ENCODE measurements at regions of chr2 and their contacts with region 1.

Region 1: GRCh38 chr2:231104115-231104713 is 20.6 kb downstream of the HTR2B start:
- DNase-seq: peak; percentile 75
- H3K4me3 ChIP-seq: no peak overlapping the region
- H3K27ac ChIP-seq: peak overlapping the region; percentile 55 to 76 (median 65)
- H3K4me1 ChIP-seq: peaks cover 0 to 48% (median 38%) of the 10 kb centered on the region in 4 donors
- H3K27me3 ChIP-seq: no peaks in the 10 kb centered on the region
- CTCF ChIP-seq: peak; percentile 84 to 91 (median 87)
- EP300 ChIP-seq: no peak
- POLR2A ChIP-seq: no peak

Region 2: DNA sequence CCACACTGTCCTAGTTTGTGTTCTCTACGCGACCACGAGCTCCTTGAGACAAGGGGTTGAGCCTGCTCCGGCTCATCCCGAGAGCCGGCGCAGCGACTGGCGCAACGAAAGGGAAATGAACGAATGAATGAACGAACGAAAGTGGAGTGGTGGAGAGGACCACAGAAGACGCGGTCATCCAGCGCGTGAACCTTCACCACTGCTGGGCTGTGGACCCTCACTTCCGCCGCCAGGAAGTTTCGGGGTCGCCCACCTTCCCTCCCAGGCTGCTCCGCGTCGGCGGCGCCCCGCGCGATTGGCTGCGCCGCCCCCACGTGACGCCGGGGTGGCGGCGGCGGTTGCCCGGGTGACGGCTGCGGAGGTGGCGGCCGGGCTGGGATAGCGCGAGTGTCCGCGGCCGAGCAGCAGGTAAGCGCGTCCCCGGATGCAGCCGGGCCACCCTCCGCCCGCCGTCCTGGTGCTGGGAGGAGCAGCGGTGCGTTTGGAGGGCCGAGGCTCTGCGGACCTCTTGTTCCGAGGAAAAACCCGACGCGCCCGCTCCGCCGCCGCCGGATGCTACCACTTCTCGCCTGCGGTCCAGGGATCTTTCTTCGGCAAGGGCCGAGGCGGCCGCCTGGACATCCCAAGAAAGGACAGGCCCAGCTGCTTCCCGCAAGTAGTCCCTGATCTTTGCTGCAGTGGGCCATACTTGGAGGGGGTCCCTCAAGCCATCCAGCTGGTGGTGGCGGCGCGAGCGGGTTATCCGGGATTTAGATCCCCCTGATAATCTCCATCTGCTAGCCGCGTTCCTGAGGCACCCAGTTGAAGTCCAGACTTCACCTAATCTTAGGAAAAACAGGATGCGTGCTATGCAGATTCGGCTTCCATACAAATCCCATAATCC is 94.3 kb after region 1 on chr2 and contains the start of gene ARMC9:
- intact Hi-C with region 1: loop called (anchors 2 kb)
- DNase-seq: peak; percentile 82
- H3K4me3 ChIP-seq: peak within 1 kb of the TSS; percentile 57 to 81 (median 77)
- H3K27ac ChIP-seq: peak within 1 kb of the TSS; percentile 77 to 91 (median 84)
- H3K4me1 ChIP-seq: peaks cover 0 to 48% (median 36%) of the 10 kb centered on the region in 4 donors
- H3K27me3 ChIP-seq: no peaks in the 10 kb centered on the region
- CTCF ChIP-seq: no peak
- EP300 ChIP-seq: no peak
- POLR2A ChIP-seq: peak in 1 of 2 donors; percentile 35
- total RNA-seq, gene ARMC9: 24.3 to 95.3 (median 52.7) TPM

Region 3: DNA sequence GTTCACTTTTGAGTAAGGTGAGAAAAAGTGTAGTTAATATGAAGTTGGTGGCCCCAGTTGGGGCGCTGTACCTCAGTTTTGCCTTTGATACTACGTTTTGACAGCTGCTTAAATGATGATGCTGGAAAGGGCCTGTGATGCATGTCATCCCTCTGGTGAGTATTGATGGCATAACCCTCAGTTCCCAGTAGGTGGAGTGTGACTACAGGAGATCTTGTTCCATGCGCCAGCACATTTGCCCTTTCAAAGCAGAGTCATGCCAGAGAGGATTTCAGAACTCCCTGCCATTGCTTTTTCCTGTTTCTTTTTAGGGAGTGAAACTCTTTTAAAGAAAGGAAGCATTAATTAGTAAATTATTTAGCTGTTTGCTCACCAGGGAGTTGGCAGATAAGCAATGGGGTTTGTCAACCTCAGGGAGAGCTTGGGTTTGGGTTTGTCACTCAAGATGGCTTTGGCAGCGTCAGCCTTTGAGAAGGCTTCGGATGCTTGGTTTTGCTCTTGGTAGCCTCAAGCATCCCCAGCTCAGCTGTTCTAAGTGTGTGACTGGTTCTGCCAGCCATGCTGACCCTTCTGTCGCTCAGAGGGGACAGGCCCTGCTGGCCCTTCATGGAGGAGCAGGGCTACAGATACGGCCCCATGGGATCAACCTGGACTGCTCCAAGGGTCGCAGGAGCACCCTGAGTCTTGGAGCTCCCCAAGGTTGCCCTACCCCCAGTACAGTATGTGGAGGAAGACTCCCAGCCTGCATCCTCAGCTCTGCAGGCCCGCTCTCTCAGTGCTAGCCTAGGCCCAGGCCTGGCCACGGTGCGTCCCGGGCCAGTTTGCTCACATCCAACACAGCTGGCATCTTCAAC is 123.3 kb after region 1 on chr2:
- intact Hi-C with region 1: loop called (anchors 1 kb)
- DNase-seq: peak; percentile 88
- H3K4me3 ChIP-seq: no peak overlapping the region
- H3K27ac ChIP-seq: peak overlapping the region; percentile 69 to 89 (median 82)
- H3K4me1 ChIP-seq: peaks cover 0 to 64% (median 49%) of the 10 kb centered on the region in 4 donors
- H3K27me3 ChIP-seq: no peaks in the 10 kb centered on the region
- CTCF ChIP-seq: peak; percentile 75 to 93 (median 84)
- EP300 ChIP-seq: no peak
- POLR2A ChIP-seq: no peak

Region 4: DNA sequence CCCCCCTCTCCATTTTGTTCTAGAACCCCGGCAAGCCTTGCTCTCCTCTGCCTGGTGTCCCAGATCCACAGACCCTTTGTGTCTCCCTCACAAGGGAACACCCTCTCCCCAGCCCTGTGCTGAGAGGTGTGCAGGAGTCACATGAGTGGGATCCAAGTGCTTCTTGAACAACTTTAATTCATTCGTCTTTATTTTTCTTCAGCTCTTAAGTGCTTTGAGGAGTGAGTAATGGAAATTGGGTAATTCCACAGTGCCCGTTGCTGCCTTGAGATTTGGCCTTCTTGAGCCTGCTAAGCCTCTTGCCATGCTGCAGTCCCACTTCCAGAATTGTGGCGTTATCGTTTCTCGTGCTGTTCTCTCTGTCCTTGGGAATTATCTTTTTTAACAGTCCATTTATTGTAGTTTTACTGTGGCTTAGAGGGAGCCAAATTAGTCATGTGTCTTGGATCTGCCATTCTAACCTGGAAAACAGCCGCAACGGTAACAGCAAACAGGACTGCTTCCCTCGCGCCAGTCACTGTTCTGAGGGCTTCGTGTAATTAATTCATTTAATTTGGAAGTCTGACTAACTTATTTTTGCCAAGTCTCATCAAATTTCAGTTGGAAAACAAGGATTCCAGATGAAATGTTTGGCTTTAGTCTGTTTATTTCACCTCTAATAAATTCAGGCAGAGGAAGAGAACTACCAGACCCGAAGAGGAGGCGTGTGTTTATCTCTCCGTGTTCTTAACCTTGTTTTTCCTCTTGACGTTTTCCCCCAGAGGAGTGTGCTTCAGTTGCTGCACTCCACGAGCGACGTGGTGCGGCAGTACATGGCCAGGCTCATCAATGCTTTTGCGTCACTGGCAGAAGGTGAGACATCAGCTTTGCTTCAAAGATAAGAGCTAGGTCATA is 166.3 kb after region 1 on chr2:
- intact Hi-C with region 1: loop called (anchors 5 kb)
- DNase-seq: peak; percentile 94
- H3K4me3 ChIP-seq: peak overlapping the region in 3 of 4 donors; percentile 1 to 34 (median 6)
- H3K27ac ChIP-seq: peak overlapping the region in 3 of 4 donors; percentile 85 to 91 (median 85)
- H3K4me1 ChIP-seq: peaks cover 0 to 39% (median 23%) of the 10 kb centered on the region in 4 donors
- H3K27me3 ChIP-seq: no peaks in the 10 kb centered on the region
- CTCF ChIP-seq: no peak
- EP300 ChIP-seq: peak; percentile 73 to 88 (median 82)
- POLR2A ChIP-seq: no peak

Region 5: DNA sequence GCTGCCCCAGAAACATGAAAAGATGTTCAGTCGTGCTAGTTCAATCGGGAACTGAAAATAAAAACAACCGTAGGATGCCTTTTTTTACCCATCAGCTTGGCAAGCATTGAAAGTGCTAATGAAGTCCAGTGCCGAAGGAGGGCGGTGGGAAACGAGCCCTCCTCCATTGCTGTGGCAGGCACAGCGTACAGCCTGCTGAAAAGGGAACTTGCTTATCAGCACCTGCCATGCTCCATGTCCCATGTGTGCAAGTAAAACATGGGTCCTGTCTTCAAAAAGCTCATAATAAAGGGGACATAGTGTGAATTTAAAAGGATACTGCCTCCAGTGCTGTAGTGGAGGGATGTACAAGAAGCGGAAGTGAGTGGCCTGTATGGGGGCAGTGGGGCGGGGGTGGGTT is 176.6 kb after region 1 on chr2:
- intact Hi-C with region 1: loop called (anchors 5 kb)
- DNase-seq: no peak
- H3K4me3 ChIP-seq: no peak overlapping the region
- H3K27ac ChIP-seq: no peak overlapping the region
- H3K4me1 ChIP-seq: no peaks in the 10 kb centered on the region
- H3K27me3 ChIP-seq: no peaks in the 10 kb centered on the region
- CTCF ChIP-seq: no peak
- EP300 ChIP-seq: no peak
- POLR2A ChIP-seq: no peak

Region 6: DNA sequence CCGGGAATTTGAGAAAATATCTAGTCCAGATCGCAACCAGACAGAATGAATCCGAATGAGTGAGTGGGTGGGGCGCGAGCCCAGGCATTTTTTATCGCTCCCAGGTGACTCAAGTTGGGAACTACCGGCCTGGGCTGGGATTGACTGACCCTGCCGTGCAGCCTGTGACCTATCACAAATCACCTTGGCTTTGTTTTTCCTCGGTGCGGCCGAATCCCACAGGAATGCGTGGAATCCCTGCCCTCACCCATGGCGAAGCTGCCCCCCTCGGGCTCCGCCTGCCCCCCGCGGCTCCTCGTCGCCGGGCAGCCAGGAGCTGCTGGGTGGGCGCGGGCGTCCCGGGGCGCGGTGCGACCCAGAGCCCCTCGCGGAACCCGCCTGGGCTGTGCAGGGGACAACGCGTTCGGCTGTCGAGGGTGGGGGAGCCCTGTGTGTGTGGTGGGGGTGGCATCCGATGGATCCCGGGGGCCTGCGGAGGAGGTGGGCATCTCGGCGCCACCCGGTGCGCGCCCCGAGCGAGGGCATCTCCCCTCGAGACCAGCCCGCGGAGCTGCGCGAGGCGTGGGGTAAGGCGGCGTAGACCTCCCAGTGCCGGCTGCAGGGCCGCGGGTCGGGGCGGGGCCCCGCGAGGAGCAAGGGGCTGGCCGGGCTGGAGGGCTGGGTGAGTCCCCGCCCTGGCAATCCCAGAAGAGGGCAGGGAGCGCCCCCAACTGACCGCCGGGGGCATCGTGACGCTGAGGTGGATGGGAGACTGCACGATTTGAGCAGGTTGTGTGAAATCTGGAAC is 307.8 kb after region 1 on chr2:
- intact Hi-C with region 1: loop called (anchors 2 kb)
- DNase-seq: peak; percentile 94
- H3K4me3 ChIP-seq: peak overlapping the region; percentile 58 to 76 (median 72)
- H3K27ac ChIP-seq: peak overlapping the region in 3 of 4 donors; percentile 39 to 72 (median 70)
- H3K4me1 ChIP-seq: peaks cover 0 to 15% (median 13%) of the 10 kb centered on the region in 4 donors
- H3K27me3 ChIP-seq: no peaks in the 10 kb centered on the region
- CTCF ChIP-seq: peak; percentile 72 to 95 (median 82)
- EP300 ChIP-seq: no peak
- POLR2A ChIP-seq: no peak

Region 7: DNA sequence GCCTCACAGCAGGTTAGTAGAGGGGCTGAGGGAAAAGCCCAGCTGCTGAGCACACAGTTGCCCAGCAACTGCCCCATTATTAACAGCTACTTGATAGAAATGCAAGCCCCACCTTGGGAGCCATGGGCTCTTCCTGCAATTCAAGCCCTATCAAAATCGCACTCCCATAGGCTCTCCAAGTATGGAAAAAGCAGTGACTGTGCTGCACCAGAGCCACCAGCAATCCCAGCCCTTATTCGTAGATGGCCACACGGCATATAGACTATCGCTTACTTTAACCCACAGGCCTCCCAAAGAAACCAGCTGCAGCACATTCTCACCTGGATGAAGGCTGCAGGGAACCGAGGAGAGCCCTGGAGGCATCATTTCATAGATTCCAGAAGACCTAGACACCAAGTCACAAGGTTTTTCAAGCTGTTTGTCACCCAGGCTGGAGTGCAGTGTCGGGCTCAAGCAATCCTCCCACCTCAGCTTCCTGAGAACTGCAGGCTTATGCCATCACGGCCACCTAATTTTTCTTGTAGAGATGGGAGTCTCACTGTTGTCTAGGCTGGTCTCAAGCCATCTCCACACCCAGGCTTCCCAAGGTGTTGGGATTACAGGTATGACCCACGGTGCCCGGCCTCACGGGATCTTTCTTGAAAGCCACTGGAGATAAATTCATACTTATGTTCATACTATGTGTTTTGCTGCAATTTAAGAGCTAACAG is 348.7 kb after region 1 on chr2:
- intact Hi-C with region 1: loop called (anchors 5 kb)
- DNase-seq: no peak
- H3K4me3 ChIP-seq: no peak overlapping the region
- H3K27ac ChIP-seq: peak overlapping the region in 3 of 4 donors; percentile 9 to 46 (median 23)
- H3K4me1 ChIP-seq: peaks cover 0 to 13% (median 2%) of the 10 kb centered on the region in 4 donors
- H3K27me3 ChIP-seq: no peaks in the 10 kb centered on the region
- CTCF ChIP-seq: no peak
- EP300 ChIP-seq: no peak
- POLR2A ChIP-seq: no peak